OCI-LY7 (cell line): ENCODE measurements at regions of chr1 and their contacts with region 1.

Region 1: GRCh38 chr1:107829061-107830040 is 135.6 kb downstream of the VAV3 start:
- DNase-seq: peak; percentile 73
- H3K4me3 ChIP-seq: peak overlapping the region; percentile 22
- H3K27ac ChIP-seq: peak overlapping the region; percentile 57
- H3K4me1 ChIP-seq: peaks cover 26% of the 10 kb centered on the region
- CTCF ChIP-seq: no peak

Region 2: GRCh38 chr1:107795994-107796393 is 33.4 kb before region 1 on chr1:
- CTCF ChIA-PET with region 1: no interaction called
- POLR2A ChIA-PET with region 1: interaction called, 15 read pairs
- intact Hi-C with region 1: no loop called
- DNase-seq: peak; percentile 42
- H3K4me3 ChIP-seq: peak overlapping the region; percentile 39
- H3K27ac ChIP-seq: peak overlapping the region; percentile 68
- H3K4me1 ChIP-seq: peaks cover 55% of the 10 kb centered on the region
- CTCF ChIP-seq: no peak

Region 3: DNA sequence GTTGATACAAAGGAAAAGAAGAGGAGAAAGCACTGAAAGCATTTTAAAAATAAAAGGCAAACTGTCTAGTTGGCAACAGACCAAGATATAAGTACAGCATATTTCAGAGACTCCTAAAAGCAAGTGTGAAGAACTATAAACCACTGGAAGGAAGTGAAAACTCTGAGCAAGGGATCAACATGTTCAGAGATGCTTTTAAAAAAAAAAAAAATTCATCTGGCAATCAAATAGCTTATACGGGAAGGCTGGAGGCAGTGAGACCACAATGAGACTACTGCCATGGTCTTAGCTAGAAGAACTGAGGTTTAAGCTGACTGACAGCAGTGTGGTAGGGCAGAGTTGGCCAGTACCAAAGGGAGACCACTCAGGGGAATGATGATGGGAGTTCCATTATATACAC is 11.4 kb after region 1 on chr1:
- CTCF ChIA-PET with region 1: no interaction called
- POLR2A ChIA-PET with region 1: interaction called, 44 read pairs
- intact Hi-C with region 1: no loop called
- DNase-seq: peak; percentile 41
- H3K4me3 ChIP-seq: no peak overlapping the region
- H3K27ac ChIP-seq: no peak overlapping the region
- H3K4me1 ChIP-seq: peaks cover 49% of the 10 kb centered on the region
- CTCF ChIP-seq: no peak

Region 4: DNA sequence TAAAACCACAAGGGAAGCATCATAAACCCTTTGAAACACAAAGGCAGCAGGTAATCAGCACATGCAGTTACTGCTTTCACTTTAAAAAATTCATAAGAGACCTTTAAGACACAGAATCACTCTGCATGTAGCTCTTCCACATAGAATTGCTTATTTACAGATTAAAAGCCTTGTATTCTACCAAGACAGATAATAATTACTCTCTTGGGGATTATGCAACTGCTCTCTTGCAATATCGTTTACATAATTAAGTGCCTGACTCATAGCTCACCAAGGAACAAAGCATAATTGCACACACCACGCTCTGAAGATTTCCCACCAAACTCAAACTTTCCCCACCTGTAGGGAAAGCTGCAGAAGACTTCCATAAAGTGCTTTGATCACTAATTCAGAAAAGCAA is 47.7 kb after region 1 on chr1:
- CTCF ChIA-PET with region 1: no interaction called
- POLR2A ChIA-PET with region 1: interaction called, 6 read pairs
- intact Hi-C with region 1: loop called (anchors 5 kb)
- DNase-seq: no peak
- H3K4me3 ChIP-seq: peak overlapping the region; percentile 38
- H3K27ac ChIP-seq: no peak overlapping the region
- H3K4me1 ChIP-seq: peaks cover 47% of the 10 kb centered on the region
- CTCF ChIP-seq: no peak